ENCODE measurements at regions of chr13 and their contacts with region 1.

Region 1: GRCh38 chr13:100514788-100515409 is 73.7 kb downstream of the GGACT start:
- DNase-seq: peak; percentile 29 to 82 (median 74)
- ATAC-seq: peak; percentile 96
- H3K4me3 ChIP-seq: no peak overlapping the region
- H3K4me3 Mint-ChIP-seq: no peak overlapping the region
- H3K27ac ChIP-seq: no peak overlapping the region
- H3K27ac Mint-ChIP-seq: no peak overlapping the region
- H3K4me1 ChIP-seq: no peaks in the 10 kb centered on the region
- H3K4me1 Mint-ChIP-seq: peaks cover 13% of the 10 kb centered on the region
- H3K27me3 ChIP-seq: no peaks in the 10 kb centered on the region
- H3K27me3 Mint-ChIP-seq: no peaks in the 10 kb centered on the region
- CTCF ChIP-seq: peak; percentile 97

Region 2: GRCh38 chr13:99442273-99442895 is 1072.5 kb before region 1 on chr13:
- CTCF ChIA-PET with region 1: interaction called, 10 read pairs
- POLR2A ChIA-PET with region 1: no interaction called
- intact Hi-C with region 1: loop called in 1 of 2 experiments (anchors 2 kb)
- DNase-seq: peak in 7 of 9 experiments; percentile 40 to 78 (median 59)
- ATAC-seq: peak; percentile 92
- H3K4me3 ChIP-seq: no peak overlapping the region
- H3K4me3 Mint-ChIP-seq: no peak overlapping the region
- H3K27ac ChIP-seq: no peak overlapping the region
- H3K27ac Mint-ChIP-seq: no peak overlapping the region
- H3K4me1 ChIP-seq: peaks cover 4% of the 10 kb centered on the region
- H3K4me1 Mint-ChIP-seq: peaks cover 5% of the 10 kb centered on the region
- H3K27me3 ChIP-seq: no peaks in the 10 kb centered on the region
- H3K27me3 Mint-ChIP-seq: no peaks in the 10 kb centered on the region
- CTCF ChIP-seq: peak; percentile 99

Region 3: GRCh38 chr13:99908140-99908803 is 606.6 kb before region 1 on chr13:
- CTCF ChIA-PET with region 1: interaction called, 14 read pairs
- POLR2A ChIA-PET with region 1: no interaction called
- intact Hi-C with region 1: no loop called
- DNase-seq: no peak
- ATAC-seq: no peak
- H3K4me3 ChIP-seq: no peak overlapping the region
- H3K4me3 Mint-ChIP-seq: no peak overlapping the region
- H3K27ac ChIP-seq: no peak overlapping the region
- H3K27ac Mint-ChIP-seq: no peak overlapping the region
- H3K4me1 ChIP-seq: no peaks in the 10 kb centered on the region
- H3K4me1 Mint-ChIP-seq: peaks cover 6% of the 10 kb centered on the region
- H3K27me3 ChIP-seq: peaks cover 0 to 2% of the 10 kb centered on the region in 2 experiments
- H3K27me3 Mint-ChIP-seq: peaks cover 46% of the 10 kb centered on the region
- CTCF ChIP-seq: no peak

Region 4: GRCh38 chr13:100039740-100040139 is 475.2 kb before region 1 on chr13:
- CTCF ChIA-PET with region 1: no interaction called
- POLR2A ChIA-PET with region 1: no interaction called
- intact Hi-C with region 1: loop called in 1 of 2 experiments (anchors 10 kb)
- DNase-seq: no peak
- ATAC-seq: no peak
- H3K4me3 ChIP-seq: no peak overlapping the region
- H3K4me3 Mint-ChIP-seq: no peak overlapping the region
- H3K27ac ChIP-seq: no peak overlapping the region
- H3K27ac Mint-ChIP-seq: no peak overlapping the region
- H3K4me1 ChIP-seq: no peaks in the 10 kb centered on the region
- H3K4me1 Mint-ChIP-seq: no peaks in the 10 kb centered on the region
- H3K27me3 ChIP-seq: no peaks in the 10 kb centered on the region
- H3K27me3 Mint-ChIP-seq: peaks cover 3% of the 10 kb centered on the region
- CTCF ChIP-seq: no peak

Region 5: GRCh38 chr13:100502446-100502845 is 12.5 kb before region 1 on chr13:
- CTCF ChIA-PET with region 1: interaction called, 17 read pairs
- POLR2A ChIA-PET with region 1: no interaction called
- intact Hi-C with region 1: no loop called
- DNase-seq: no peak
- ATAC-seq: no peak
- H3K4me3 ChIP-seq: no peak overlapping the region
- H3K4me3 Mint-ChIP-seq: no peak overlapping the region
- H3K27ac ChIP-seq: no peak overlapping the region
- H3K27ac Mint-ChIP-seq: no peak overlapping the region
- H3K4me1 ChIP-seq: no peaks in the 10 kb centered on the region
- H3K4me1 Mint-ChIP-seq: peaks cover 17% of the 10 kb centered on the region
- H3K27me3 ChIP-seq: no peaks in the 10 kb centered on the region
- H3K27me3 Mint-ChIP-seq: no peaks in the 10 kb centered on the region
- CTCF ChIP-seq: no peak

Measured in CD8-positive, alpha-beta T cell (primary cell).